GM12878 (cell line): ENCODE measurements at regions of chr6 and their contacts with region 1.

Region 1: DNA sequence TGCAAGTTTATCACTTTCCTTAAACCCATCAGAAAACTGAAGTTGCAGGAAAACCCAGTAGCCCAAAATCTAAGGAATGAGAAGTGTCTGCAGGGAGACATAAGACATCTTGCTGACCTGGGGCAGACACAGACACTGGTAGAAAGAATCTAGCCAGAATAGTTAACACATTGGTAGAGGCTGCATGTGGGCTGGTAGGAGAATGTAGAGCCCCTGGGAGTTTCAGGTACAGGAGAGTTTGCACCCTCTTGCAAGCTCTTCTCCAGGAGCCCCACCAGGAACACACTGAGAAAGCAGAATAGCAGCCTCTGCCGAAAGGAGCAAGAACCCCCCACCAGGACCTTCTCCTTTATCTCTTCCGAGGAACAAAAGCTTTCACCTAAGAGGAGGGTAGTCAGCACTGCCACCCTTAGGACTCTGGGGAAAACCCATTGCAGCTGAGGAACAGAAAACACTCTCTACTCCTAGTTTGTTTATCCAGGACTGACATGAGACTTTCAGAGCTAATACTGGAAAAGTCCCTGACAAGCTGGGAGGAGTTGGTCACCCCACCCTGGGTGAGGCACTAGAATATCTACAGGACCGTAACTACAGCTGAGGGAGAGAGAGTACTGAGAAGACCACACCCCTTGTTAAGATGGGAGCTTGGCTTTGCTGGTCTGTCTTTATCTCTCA is 10.5 kb upstream of the OGFRL1 start:
- DNase-seq: no peak
- ATAC-seq: peak; percentile 90
- H3K4me3 ChIP-seq: no peak overlapping the region
- H3K27ac ChIP-seq: no peak overlapping the region
- H3K4me1 ChIP-seq: no peaks in the 10 kb centered on the region
- H3K27me3 ChIP-seq: no peaks in the 10 kb centered on the region
- CTCF ChIP-seq: no peak
- EP300 ChIP-seq: no peak
- POLR2A ChIP-seq: no peak
- RAD21 ChIP-seq: no peak

Region 2: DNA sequence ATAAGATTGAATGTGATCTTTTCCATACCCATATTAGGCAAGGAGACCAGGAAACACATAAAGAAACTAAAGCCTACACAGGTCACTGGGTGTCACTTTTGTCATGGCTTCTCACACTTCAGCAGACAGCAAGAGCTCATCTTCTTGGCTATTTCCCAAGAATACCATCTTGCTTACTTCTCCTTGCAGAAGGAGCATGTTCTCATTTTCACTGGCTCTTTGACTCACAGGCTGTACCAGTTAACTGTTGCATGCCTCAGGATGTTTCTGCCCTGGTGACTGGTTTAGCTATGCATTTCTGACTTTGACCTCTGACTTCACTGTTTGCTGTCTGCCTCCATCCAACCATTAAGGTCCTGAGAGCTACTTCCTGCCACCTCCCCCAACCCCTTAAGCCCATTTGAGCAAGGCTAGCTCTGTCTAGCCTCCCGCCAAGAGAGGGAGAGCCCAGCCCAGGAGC is 29.7 kb before region 1 on chr6:
- CTCF ChIA-PET with region 1: interaction called, 4 read pairs
- POLR2A ChIA-PET with region 1: no interaction called
- RAD21 ChIA-PET with region 1: no interaction called
- SMC1A ChIA-PET with region 1: interaction called, 11 read pairs
- in situ Hi-C with region 1: no loop called
- intact Hi-C with region 1: no loop called
- DNase-seq: peak; percentile 48
- ATAC-seq: peak; percentile 97
- H3K4me3 ChIP-seq: no peak overlapping the region
- H3K27ac ChIP-seq: no peak overlapping the region
- H3K4me1 ChIP-seq: no peaks in the 10 kb centered on the region
- H3K27me3 ChIP-seq: no peaks in the 10 kb centered on the region
- CTCF ChIP-seq: peak in 1 of 3 experiments; percentile 14; a peak in 1 of 6 replicates
- EP300 ChIP-seq: no peak
- POLR2A ChIP-seq: no peak
- RAD21 ChIP-seq: 0 out of 2 replicates have a peak, but pooled peaks have one; percentile 4

Region 3: DNA sequence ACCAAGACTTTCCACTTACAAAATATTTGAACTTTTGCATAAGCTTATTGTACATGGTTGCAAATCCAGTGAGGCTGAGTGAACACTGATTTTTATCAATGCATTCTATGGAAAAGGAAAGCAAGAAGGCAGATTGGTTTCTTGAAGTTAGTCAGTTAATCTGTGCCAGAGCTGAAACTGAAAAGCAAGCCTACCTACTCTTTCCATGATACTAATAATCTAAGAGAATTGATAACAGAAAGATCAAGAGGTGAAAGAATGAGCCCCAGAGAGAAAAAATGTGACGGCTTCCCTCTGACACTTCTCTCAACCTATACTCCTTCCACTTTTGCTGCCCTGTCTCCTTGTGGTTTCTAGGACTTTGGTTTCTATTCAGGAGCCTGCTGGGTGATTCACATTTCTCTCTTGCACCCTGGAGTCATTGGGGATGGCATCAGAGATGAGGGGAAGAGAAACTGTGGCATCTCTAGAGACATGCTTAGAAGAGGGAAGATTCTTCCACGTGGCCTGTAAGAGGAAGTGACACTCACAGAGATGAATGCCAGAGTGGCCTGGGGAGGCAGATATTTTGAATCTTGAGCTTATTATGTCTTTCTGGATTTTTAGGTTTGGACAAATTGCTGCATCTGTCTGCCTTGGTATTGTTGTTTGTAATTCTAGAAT is 449.7 kb after region 1 on chr6:
- CTCF ChIA-PET with region 1: no interaction called
- POLR2A ChIA-PET with region 1: no interaction called
- RAD21 ChIA-PET with region 1: no interaction called
- SMC1A ChIA-PET with region 1: no interaction called
- in situ Hi-C with region 1: no loop called
- intact Hi-C with region 1: no loop called
- DNase-seq: peak; percentile 8
- ATAC-seq: peak; percentile 88
- H3K4me3 ChIP-seq: no peak overlapping the region
- H3K27ac ChIP-seq: no peak overlapping the region
- H3K4me1 ChIP-seq: no peaks in the 10 kb centered on the region
- H3K27me3 ChIP-seq: no peaks in the 10 kb centered on the region
- CTCF ChIP-seq: no peak
- EP300 ChIP-seq: no peak
- POLR2A ChIP-seq: no peak
- RAD21 ChIP-seq: no peak